ENCODE measurements at regions of chr3 and their contacts with region 1.

Region 1: GRCh38 chr3:119498186-119498987 is at the start of gene TIMMDC1:
- DNase-seq: peak; percentile 95 to 98 (median 96)
- H3K4me3 ChIP-seq: peak within 1 kb of the TSS; percentile 62 to 95 (median 88)
- H3K4me3 Mint-ChIP-seq: peak within 1 kb of the TSS; percentile 96 to 99
- H3K27ac ChIP-seq: peak within 1 kb of the TSS; percentile 81 to 99
- H3K27ac Mint-ChIP-seq: peak within 1 kb of the TSS; percentile 96 to 99 (median 98)
- H3K4me1 ChIP-seq: peaks cover 17 to 19% of the 10 kb centered on the region in 2 donors
- H3K4me1 Mint-ChIP-seq: peaks cover 32% of the 10 kb centered on the region
- H3K27me3 ChIP-seq: no peaks in the 10 kb centered on the region
- H3K27me3 Mint-ChIP-seq: peaks cover 2 to 3% (median 2%) of the 10 kb centered on the region in 3 donors
- CTCF ChIP-seq: no peak
- polyA plus RNA-seq, gene TIMMDC1: 34.1 to 81.1 (median 78.2) TPM

Region 2: GRCh38 chr3:119469381-119470189 is 28.8 kb before region 1 on chr3:
- intact Hi-C with region 1: loop called (anchors 2 to 5 kb)
- DNase-seq: peak in 1 of 3 donors; percentile 67
- H3K4me3 ChIP-seq: peak overlapping the region; percentile 66 to 93 (median 69)
- H3K4me3 Mint-ChIP-seq: peak overlapping the region; percentile 91 to 99
- H3K27ac ChIP-seq: peak overlapping the region; percentile 2 to 86
- H3K27ac Mint-ChIP-seq: peak overlapping the region; percentile 2 to 93 (median 69)
- H3K4me1 ChIP-seq: peaks cover 19 to 28% of the 10 kb centered on the region in 2 donors
- H3K4me1 Mint-ChIP-seq: peaks cover 27% of the 10 kb centered on the region
- H3K27me3 ChIP-seq: no peaks in the 10 kb centered on the region
- H3K27me3 Mint-ChIP-seq: peaks cover 0 to 3% (median 1%) of the 10 kb centered on the region in 3 donors
- CTCF ChIP-seq: no peak

Region 3: DNA sequence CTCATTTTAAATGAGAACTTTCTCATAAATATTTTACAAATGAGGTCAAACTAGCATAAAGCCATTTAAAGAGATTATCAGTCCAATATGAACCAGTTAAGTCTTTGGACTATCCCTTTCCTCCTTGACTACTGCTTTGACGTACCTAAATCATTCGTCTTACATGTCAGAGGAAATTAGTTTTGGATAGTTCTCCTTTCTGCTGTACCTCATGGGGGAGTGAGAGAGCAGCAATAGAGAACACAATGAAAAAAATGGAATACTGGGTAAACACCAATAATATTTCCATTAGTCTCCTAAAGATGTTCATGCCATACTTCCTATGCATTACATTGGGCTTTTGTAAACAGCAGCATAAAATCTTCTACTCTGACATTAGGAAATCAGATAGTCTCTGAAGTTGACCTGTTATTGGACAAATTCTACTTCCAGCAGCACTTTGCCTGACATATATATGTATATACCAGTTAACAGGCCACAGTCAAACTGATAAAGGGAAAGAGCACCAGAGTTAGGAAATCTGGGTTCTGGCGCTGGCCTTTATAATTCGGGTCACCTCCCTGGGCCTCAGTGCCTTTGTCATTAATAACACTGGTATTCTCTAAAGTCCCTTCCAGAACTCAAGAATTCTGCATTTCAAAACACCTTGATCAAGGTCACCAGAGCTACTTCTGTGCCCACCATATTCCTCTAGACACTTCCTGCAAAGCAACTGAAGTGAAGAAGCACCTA is 26.7 kb after region 1 on chr3:
- intact Hi-C with region 1: no loop called
- DNase-seq: peak; percentile 21 to 41 (median 22)
- H3K4me3 ChIP-seq: no peak overlapping the region
- H3K4me3 Mint-ChIP-seq: no peak overlapping the region
- H3K27ac ChIP-seq: peak overlapping the region in 1 of 2 donors; percentile 39
- H3K27ac Mint-ChIP-seq: peak overlapping the region in 2 of 7 donors; percentile 7 to 29
- H3K4me1 ChIP-seq: no peaks in the 10 kb centered on the region
- H3K4me1 Mint-ChIP-seq: no peaks in the 10 kb centered on the region
- H3K27me3 ChIP-seq: no peaks in the 10 kb centered on the region
- H3K27me3 Mint-ChIP-seq: no peaks in the 10 kb centered on the region
- CTCF ChIP-seq: peak; percentile 68

Region 4: GRCh38 chr3:119618905-119619493 is 120.6 kb after region 1 on chr3:
- intact Hi-C with region 1: no loop called
- DNase-seq: no peak
- H3K4me3 ChIP-seq: no peak overlapping the region
- H3K4me3 Mint-ChIP-seq: no peak overlapping the region
- H3K27ac ChIP-seq: no peak overlapping the region
- H3K27ac Mint-ChIP-seq: no peak overlapping the region
- H3K4me1 ChIP-seq: peaks cover 0 to 1% of the 10 kb centered on the region in 2 donors
- H3K4me1 Mint-ChIP-seq: peaks cover 6% of the 10 kb centered on the region
- H3K27me3 ChIP-seq: no peaks in the 10 kb centered on the region
- H3K27me3 Mint-ChIP-seq: peaks cover 0 to 2% (median 0%) of the 10 kb centered on the region in 3 donors
- CTCF ChIP-seq: no peak

Region 5: GRCh38 chr3:119676771-119677640 is 178.6 kb after region 1 on chr3 and contains the start of gene COX17:
- intact Hi-C with region 1: loop called (anchors 2 to 5 kb)
- DNase-seq: peak; percentile 95 to 97 (median 95)
- H3K4me3 ChIP-seq: peak within 1 kb of the TSS; percentile 81 to 97 (median 89)
- H3K4me3 Mint-ChIP-seq: peak within 1 kb of the TSS; percentile 83 to 99
- H3K27ac ChIP-seq: peak within 1 kb of the TSS; percentile 94 to 98
- H3K27ac Mint-ChIP-seq: peak within 1 kb of the TSS; percentile 97 to 100 (median 99)
- H3K4me1 ChIP-seq: peaks cover 9 to 20% of the 10 kb centered on the region in 2 donors
- H3K4me1 Mint-ChIP-seq: peaks cover 18% of the 10 kb centered on the region
- H3K27me3 ChIP-seq: no peaks in the 10 kb centered on the region
- H3K27me3 Mint-ChIP-seq: no peaks in the 10 kb centered on the region
- CTCF ChIP-seq: no peak
- polyA plus RNA-seq, gene COX17: 23.0 to 83.6 (median 81.6) TPM

Measured in CD14-positive monocyte (primary cell).